Heart right ventricle (tissue), 16 donors: ENCODE measurements at regions of chr2 and their contacts with region 1.

Region 1: GRCh38 chr2:58046585-58047372 is at the start of gene VRK2:
- DNase-seq: peak; percentile 86 to 88
- ATAC-seq: peak; percentile 97 to 99 (median 98)
- H3K4me3 ChIP-seq: peak within 1 kb of the TSS; percentile 46 to 84 (median 73)
- H3K27ac ChIP-seq: peak within 1 kb of the TSS; percentile 89 to 97 (median 94)
- H3K4me1 ChIP-seq: peaks cover 3 to 43% (median 25%) of the 10 kb centered on the region in 9 donors
- H3K27me3 ChIP-seq: no peaks in the 10 kb centered on the region
- CTCF ChIP-seq: peak in 4 of 9 donors; percentile 16 to 53 (median 46)
- total RNA-seq, gene VRK2: 22.8 to 31.0 (median 26.6) TPM

Region 2: GRCh38 chr2:58019209-58019608 is 27.6 kb before region 1 on chr2:
- intact Hi-C with region 1: no loop called
- DNase-seq: no peak
- ATAC-seq: no peak
- H3K4me3 ChIP-seq: no peak overlapping the region
- H3K27ac ChIP-seq: no peak overlapping the region
- H3K4me1 ChIP-seq: peaks cover 0 to 3% (median 0%) of the 10 kb centered on the region in 9 donors
- H3K27me3 ChIP-seq: no peaks in the 10 kb centered on the region
- CTCF ChIP-seq: no peak

Region 3: DNA sequence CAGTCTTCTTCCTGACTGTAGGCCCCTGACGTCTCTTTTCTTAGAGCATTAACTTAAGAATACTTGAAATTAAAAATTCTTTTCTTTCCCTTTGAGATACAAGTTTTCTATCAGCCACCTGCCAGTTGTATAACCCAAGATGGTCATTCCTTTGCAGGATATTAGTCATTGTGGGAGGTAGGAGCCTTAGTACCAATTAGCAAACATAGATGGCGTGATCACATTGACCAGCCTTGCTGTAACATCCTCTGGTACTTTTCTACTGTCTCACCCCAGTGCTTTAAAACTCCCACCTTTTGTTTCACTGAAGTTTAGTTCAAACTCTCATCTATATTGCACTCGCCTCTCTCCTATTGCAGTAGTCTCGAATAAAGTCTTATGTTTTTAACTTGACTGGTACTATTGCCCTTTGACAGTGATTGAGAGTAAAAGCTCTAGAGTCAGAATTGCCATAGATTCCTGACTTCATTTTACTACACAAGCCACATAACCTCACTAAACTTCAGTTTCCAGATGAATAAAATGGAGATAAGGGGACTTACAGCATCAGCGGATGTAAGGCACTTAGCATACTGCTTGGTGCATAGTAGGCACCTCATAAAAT is 73.9 kb after region 1 on chr2:
- intact Hi-C with region 1: no loop called
- DNase-seq: no peak
- ATAC-seq: no peak
- H3K4me3 ChIP-seq: no peak overlapping the region
- H3K27ac ChIP-seq: no peak overlapping the region
- H3K4me1 ChIP-seq: no peaks in the 10 kb centered on the region
- H3K27me3 ChIP-seq: no peaks in the 10 kb centered on the region
- CTCF ChIP-seq: no peak

Region 4: DNA sequence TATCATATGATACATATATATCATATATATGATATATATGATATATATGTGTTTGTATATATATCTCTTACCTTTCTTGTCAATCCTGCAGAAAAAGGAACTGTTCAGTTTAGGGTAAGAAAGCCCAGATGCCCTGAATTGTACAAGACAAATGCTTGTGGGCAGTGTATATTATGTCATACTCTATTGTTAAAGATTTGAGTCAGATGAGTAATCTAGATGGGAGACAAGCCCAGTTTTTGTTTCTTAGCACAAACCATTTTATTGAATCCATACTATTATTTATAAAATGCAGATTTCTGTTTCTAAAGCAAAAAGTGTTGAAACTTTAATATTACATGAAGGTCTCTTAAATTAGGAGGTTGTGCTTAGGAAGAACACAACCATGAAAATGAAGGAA is 90.4 kb after region 1 on chr2:
- intact Hi-C with region 1: loop called in 1 of 10 experiments (anchors 2 kb)
- DNase-seq: no peak
- ATAC-seq: peak in 2 of 8 donors; percentile 61 to 62
- H3K4me3 ChIP-seq: no peak overlapping the region
- H3K27ac ChIP-seq: no peak overlapping the region
- H3K4me1 ChIP-seq: peaks cover 0 to 18% (median 11%) of the 10 kb centered on the region in 9 donors
- H3K27me3 ChIP-seq: no peaks in the 10 kb centered on the region
- CTCF ChIP-seq: no peak

Region 5: GRCh38 chr2:58240670-58241545 is 194.1 kb after region 1 on chr2 and contains the start of gene FANCL:
- intact Hi-C with region 1: loop called in 2 of 10 experiments (anchors 5 to 10 kb)
- DNase-seq: peak; percentile 90 to 92
- ATAC-seq: peak; percentile 97 to 100 (median 98)
- H3K4me3 ChIP-seq: peak within 1 kb of the TSS; percentile 51 to 91 (median 83)
- H3K27ac ChIP-seq: peak within 1 kb of the TSS in 9 of 10 donors; percentile 61 to 89 (median 84)
- H3K4me1 ChIP-seq: peaks cover 5 to 25% (median 12%) of the 10 kb centered on the region in 9 donors
- H3K27me3 ChIP-seq: no peaks in the 10 kb centered on the region
- CTCF ChIP-seq: peak in 1 of 9 donors; percentile 13
- total RNA-seq, gene FANCL: 8.9 to 16.3 (median 11.9) TPM